GM10248 (cell line): ENCODE measurements at regions of chr4 and their contacts with region 1.

Region 1: GRCh38 chr4:81069706-81070331 is 39.3 kb downstream of the BMP3 start:
- DNase-seq: peak; percentile 35
- CTCF ChIP-seq: peak; percentile 90

Region 2: GRCh38 chr4:80685214-80685613 is 384.6 kb before region 1 on chr4:
- CTCF ChIA-PET with region 1: no interaction called
- POLR2A ChIA-PET with region 1: no interaction called
- DNase-seq: no peak
- CTCF ChIP-seq: no peak

Region 3: DNA sequence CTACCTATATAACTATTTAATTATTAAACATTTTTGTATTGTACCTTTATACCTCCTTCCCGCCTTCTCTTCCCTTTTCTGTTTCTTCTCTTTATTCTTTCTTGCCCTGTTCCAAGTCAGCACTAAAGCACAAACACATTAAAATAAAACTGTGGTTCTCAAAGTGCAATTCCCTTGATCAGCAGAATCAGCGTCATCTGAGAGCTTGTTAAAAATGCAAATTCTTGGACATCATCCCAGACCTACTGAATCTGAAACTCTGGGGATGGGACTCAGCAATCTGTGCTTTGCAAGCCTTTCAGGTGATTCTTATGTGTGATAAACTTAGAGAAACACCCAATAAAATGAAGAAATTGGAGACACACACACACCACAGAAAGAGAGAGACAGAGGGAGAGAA is 217.8 kb before region 1 on chr4:
- CTCF ChIA-PET with region 1: no interaction called
- POLR2A ChIA-PET with region 1: no interaction called
- DNase-seq: no peak
- CTCF ChIP-seq: no peak

Region 4: DNA sequence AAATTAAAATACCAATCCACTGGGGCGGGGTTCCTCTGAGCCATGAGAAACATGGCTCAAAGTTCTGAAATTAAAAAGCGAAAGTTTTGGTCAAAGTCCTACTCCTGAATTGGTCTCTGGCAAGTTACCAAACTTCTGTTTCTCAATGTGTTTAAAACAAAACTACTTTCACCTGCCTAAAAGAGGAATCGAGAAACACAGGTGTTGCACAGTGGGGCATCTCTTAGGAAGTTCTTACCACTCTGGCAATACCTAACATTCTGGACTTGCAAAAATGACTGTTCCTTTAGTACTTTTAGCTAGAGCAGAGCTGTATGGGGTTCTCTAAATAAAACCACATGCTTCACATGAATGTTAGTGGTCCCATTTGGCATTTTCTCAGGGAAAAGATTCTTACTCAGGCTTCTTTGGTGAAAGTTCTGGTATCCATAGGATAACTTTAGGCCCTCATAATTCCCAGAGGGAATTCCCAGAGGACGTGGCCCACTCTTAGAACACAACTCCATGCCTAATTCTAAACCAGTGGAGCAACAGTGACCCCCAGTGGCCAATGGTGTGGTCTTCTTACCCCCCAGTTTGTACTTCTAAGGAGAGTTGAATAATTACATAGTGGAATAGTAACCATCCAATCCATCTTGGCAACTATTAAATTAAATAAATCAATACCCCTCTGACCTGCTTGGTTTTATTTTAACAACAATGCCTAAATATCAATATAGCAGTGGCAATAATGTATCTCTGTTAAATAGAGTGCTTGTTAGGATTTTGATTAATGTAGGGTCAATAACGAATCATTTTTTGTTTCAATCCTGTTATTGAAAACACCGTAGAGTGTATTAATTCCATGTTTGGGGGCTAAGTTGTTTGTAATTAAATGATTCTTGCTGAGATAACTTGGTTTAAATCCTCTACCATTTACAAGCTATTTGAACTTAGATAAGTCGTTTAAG is 17.4 kb before region 1 on chr4:
- CTCF ChIA-PET with region 1: interaction called, 13 read pairs
- POLR2A ChIA-PET with region 1: no interaction called
- DNase-seq: peak; percentile 26
- CTCF ChIP-seq: peak; percentile 75

Region 5: GRCh38 chr4:81058621-81059020 is 11.2 kb before region 1 on chr4:
- CTCF ChIA-PET with region 1: interaction called, 13 read pairs
- POLR2A ChIA-PET with region 1: no interaction called
- DNase-seq: no peak
- CTCF ChIP-seq: no peak

Region 6: DNA sequence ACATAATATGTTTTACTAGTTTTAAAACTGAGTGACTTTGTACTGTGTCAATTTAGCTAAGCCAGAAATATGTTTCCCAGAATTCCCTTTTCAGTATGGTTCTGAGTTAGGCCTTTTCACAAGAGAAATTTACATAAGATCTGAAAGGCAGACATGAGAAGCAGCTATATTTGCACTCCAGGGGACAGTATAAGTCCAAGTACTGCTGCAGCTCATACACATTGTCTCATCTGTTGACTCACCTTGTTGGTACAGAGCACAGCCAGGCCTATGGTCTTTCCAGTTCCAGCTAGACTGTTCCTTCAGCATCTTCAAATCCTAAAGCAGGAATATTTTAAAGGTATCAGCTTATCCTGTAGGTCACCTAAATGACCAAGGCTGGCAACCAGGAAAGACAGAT is 14.2 kb after region 1 on chr4:
- CTCF ChIA-PET with region 1: interaction called, 23 read pairs
- POLR2A ChIA-PET with region 1: no interaction called
- DNase-seq: no peak
- CTCF ChIP-seq: no peak

Region 7: GRCh38 chr4:81351654-81352445 is 282.0 kb after region 1 on chr4:
- CTCF ChIA-PET with region 1: interaction called, 40 read pairs
- POLR2A ChIA-PET with region 1: no interaction called
- DNase-seq: peak; percentile 43
- CTCF ChIP-seq: peak; percentile 96